ENCODE measurements at regions of chr9 and their contacts with region 1.

Region 1: GRCh38 chr9:93276968-93277367 is 93.0 kb downstream of the WNK2 start:
- DNase-seq: no peak
- H3K4me3 ChIP-seq: no peak overlapping the region
- H3K27ac ChIP-seq: no peak overlapping the region
- H3K4me1 ChIP-seq: peaks cover 12% of the 10 kb centered on the region
- H3K27me3 ChIP-seq: no peaks in the 10 kb centered on the region
- CTCF ChIP-seq: peak; percentile 2 to 20

Region 2: DNA sequence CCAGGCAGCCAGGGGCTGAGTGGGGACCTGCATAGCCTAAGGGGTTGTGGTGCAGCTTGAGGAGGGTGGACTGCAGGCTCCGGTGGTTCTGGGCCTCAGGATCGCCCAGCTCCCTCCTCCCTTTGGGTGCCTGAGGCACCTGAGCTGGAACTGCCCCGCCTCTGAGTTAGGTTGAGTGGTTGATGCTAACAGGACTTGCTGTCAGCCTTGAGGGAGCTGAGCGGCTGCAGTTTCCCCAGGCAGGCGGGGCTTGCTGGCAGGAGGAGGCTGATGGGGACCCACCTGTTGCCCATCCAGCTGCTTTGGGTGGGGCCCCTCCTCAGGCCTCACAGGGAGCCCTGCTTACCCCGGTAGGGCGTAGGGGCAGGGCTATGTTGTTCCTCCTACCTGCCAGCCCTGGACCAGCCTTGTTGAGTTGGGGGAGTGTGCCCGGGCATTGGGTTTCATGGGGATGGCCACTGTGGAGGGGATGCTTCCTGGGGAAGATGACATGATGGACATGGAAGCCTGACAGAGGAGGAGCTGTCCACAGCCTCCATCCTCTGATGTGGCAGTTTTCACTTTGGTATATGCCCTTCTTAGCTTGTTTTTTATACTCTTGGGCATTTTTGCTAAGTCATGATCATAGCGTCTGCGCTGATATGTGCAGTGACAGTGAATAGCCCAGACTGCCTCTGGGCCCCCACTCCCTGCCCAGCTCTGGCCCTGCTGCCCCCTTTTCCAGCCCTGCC is 78.7 kb before region 1 on chr9:
- CTCF ChIA-PET with region 1: no interaction called
- dilution Hi-C with region 1: loop called (anchors 5 kb)
- in situ Hi-C with region 1: no loop called
- intact Hi-C with region 1: no loop called
- DNase-seq: no peak
- H3K4me3 ChIP-seq: no peak overlapping the region
- H3K27ac ChIP-seq: no peak overlapping the region
- H3K4me1 ChIP-seq: peaks cover 4% of the 10 kb centered on the region
- H3K27me3 ChIP-seq: no peaks in the 10 kb centered on the region
- CTCF ChIP-seq: no peak